ENCODE measurements at regions of chr14 and their contacts with region 1.

Region 1: GRCh38 chr14:60980811-60981632 is at the starts of genes SLC38A6 and TRMT5:
- DNase-seq: peak; percentile 77
- ATAC-seq: peak; percentile 99
- H3K4me3 ChIP-seq: peak within 1 kb of the TSS; percentile 92 to 95
- H3K27ac ChIP-seq: peak within 1 kb of the TSS; percentile 73
- H3K4me1 ChIP-seq: peaks cover 9% of the 10 kb centered on the region
- H3K27me3 ChIP-seq: no peaks in the 10 kb centered on the region
- CTCF ChIP-seq: no peak
- total RNA-seq, gene SLC38A6: 9.3 TPM
- total RNA-seq, gene TRMT5: 14.9 TPM

Region 2: GRCh38 chr14:60648934-60649874 is 331.8 kb before region 1 on chr14 and contains the start of gene SIX1:
- CTCF ChIA-PET with region 1: no interaction called
- POLR2A ChIA-PET with region 1: no interaction called
- in situ Hi-C with region 1: no loop called
- intact Hi-C with region 1: loop called (anchors 5 kb)
- DNase-seq: no peak
- ATAC-seq: peak; percentile 93
- H3K4me3 ChIP-seq: peak within 1 kb of the TSS; percentile 69 to 81
- H3K27ac ChIP-seq: peak within 1 kb of the TSS; percentile 90
- H3K4me1 ChIP-seq: peaks cover 29% of the 10 kb centered on the region
- H3K27me3 ChIP-seq: no peaks in the 10 kb centered on the region
- CTCF ChIP-seq: no peak
- total RNA-seq, gene SIX1: 7.4 TPM

Region 3: GRCh38 chr14:60724137-60724619 is 256.8 kb before region 1 on chr14 and contains the start of gene SIX4:
- CTCF ChIA-PET with region 1: no interaction called
- POLR2A ChIA-PET with region 1: no interaction called
- in situ Hi-C with region 1: no loop called
- intact Hi-C with region 1: loop called (anchors 1 kb)
- DNase-seq: peak; percentile 35
- ATAC-seq: peak; percentile 91
- H3K4me3 ChIP-seq: peak within 1 kb of the TSS; percentile 79 to 80
- H3K27ac ChIP-seq: peak within 1 kb of the TSS; percentile 89
- H3K4me1 ChIP-seq: peaks cover 11% of the 10 kb centered on the region
- H3K27me3 ChIP-seq: no peaks in the 10 kb centered on the region
- CTCF ChIP-seq: no peak
- total RNA-seq, gene SIX4: 17.3 TPM

Region 4: GRCh38 chr14:60970146-60970545 is 10.9 kb before region 1 on chr14:
- CTCF ChIA-PET with region 1: no interaction called
- POLR2A ChIA-PET with region 1: no interaction called
- in situ Hi-C with region 1: no loop called
- intact Hi-C with region 1: no loop called
- DNase-seq: no peak
- ATAC-seq: no peak
- H3K4me3 ChIP-seq: no peak overlapping the region
- H3K27ac ChIP-seq: no peak overlapping the region
- H3K4me1 ChIP-seq: no peaks in the 10 kb centered on the region
- H3K27me3 ChIP-seq: no peaks in the 10 kb centered on the region
- CTCF ChIP-seq: no peak

Measured in Panc1 (cell line).